ENCODE measurements at regions of chr4 and their contacts with region 1.

Region 1: DNA sequence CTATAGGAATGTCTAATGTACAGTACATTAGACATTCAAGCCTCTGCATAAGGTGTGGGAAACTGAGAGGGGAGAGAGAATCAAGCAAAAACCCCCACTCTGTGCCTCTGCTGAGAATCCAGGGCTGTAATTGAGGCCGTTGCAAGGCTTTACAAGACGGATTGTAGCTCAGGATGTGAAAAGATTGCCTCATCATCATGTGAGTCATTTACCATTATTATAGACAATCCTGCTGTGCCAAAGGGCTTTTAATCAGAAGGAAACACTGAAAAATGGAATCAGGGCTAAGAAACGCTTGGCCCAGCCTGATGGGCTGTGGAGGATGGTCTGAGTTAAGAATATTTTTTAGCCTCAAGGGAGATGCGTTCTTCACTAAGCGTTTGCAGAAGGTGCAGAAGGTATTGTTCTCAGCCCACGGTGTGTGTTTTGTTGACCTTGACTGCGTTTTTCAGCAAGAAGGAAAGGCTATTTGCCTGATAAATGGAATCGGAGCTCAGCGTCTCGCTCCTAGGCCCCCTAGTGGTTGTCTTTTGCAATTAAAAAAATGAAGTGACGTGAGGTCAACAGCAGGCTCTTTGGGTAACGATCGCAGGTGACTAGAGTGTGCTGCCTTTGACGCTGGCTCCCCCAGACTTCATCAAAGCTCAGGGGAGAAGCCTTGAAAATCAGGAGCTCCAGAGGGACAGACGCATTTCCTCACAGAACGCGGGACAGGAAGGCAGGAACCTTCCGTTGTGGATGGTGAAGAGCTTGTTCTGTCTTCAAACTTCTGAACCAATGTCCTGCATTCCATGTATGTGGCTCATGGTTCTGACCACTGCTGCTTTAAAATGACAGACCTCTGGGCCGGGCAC is 18.1 kb upstream of the CHRNA9 start:
- DNase-seq: peak; percentile 82
- ATAC-seq: peak; percentile 81
- H3K4me3 ChIP-seq: peak overlapping the region; percentile 59
- H3K27ac ChIP-seq: peak overlapping the region; percentile 100
- H3K4me1 ChIP-seq: peaks cover 46% of the 10 kb centered on the region
- H3K27me3 ChIP-seq: no peaks in the 10 kb centered on the region
- CTCF ChIP-seq: peak; percentile 81

Region 2: DNA sequence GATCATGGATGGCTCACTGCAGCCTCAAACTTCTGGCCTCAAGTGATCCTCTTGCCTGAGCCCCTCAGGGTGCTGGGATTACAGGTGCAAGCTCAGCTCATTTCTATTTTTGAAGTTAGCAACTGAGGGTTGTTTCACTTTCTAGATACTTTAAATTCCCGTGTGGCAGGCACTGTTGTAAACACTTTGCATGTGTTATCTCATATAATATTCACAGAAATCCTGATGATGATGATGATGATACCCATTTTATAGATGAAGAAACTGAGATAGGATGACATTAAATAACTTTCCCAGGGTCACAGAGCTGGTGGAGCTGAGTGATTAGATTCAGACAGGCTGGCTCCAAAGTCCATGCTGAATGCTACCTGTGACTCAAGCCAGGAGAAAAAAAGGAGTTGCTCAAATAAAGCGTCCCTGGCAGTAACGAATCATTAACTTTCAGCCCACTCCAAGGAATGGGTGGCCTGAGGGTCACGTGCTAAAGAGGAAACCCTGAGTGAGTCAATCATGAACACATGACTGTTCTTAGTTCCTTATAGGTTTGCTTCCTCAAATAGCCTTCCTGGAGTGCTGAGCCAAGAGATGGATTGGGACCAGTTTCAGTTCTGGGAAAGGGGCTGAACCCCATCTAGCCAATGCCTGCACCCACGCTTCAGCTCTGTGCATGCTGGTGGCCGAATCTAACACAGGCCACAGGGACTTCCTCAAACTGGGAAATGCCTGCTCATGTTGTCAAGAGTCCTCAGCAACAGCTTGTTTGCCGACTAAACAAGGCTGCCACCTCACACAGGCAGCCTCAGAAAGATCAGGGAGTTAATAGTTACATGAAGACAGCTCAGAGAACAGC is 259.8 kb after region 1 on chr4:
- CTCF ChIA-PET with region 1: interaction called, 3 read pairs
- POLR2A ChIA-PET with region 1: no interaction called
- intact Hi-C with region 1: loop called (anchors 10 kb)
- DNase-seq: peak; percentile 88
- ATAC-seq: peak; percentile 86
- H3K4me3 ChIP-seq: peak overlapping the region; percentile 39; the same call in 1 of the 2 replicates
- H3K27ac ChIP-seq: peak overlapping the region; percentile 83
- H3K4me1 ChIP-seq: peaks cover 16% of the 10 kb centered on the region
- H3K27me3 ChIP-seq: no peaks in the 10 kb centered on the region
- CTCF ChIP-seq: no peak